ENCODE measurements at regions of chr1 and their contacts with region 1.

Region 1: GRCh38 chr1:67832737-67833601 is at the start of gene GNG12:
- DNase-seq: peak; percentile 84
- H3K4me3 Mint-ChIP-seq: peak within 1 kb of the TSS; percentile 95
- H3K27ac Mint-ChIP-seq: peak within 1 kb of the TSS; percentile 98
- H3K4me1 Mint-ChIP-seq: peaks cover 13% of the 10 kb centered on the region
- H3K27me3 Mint-ChIP-seq: no peaks in the 10 kb centered on the region
- CTCF ChIP-seq: no peak
- total RNA-seq, gene GNG12: 72.2 and 85.6 TPM in 2 replicates

Region 2: GRCh38 chr1:67814121-67814772 is 18.7 kb before region 1 on chr1:
- CTCF ChIA-PET with region 1: interaction called, 3 read pairs
- intact Hi-C with region 1: loop called (anchors 2 kb)
- DNase-seq: no peak
- H3K4me3 Mint-ChIP-seq: no peak overlapping the region
- H3K27ac Mint-ChIP-seq: peak overlapping the region; percentile 50
- H3K4me1 Mint-ChIP-seq: peaks cover 54% of the 10 kb centered on the region
- H3K27me3 Mint-ChIP-seq: no peaks in the 10 kb centered on the region
- CTCF ChIP-seq: no peak

Region 3: DNA sequence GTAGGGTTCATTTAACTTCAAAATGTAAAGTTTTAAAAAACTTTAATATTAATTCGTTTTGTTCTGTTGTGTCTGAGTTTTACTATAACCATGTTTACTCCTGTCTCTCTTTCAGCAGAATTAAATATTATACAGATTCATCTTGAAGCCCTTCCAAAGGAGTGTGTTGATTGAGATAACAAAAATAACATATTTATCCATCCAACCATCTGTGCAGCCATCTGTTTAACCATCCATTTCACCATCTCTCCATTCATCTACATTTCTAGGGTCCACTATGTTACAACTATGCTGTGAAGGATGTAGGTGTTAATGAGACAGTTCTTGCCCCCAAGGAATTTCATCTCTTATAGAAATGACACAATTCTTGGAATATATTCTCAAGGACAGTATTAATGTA is 36.3 kb after region 1 on chr1:
- CTCF ChIA-PET with region 1: no interaction called
- intact Hi-C with region 1: no loop called
- DNase-seq: no peak
- H3K4me3 Mint-ChIP-seq: no peak overlapping the region
- H3K27ac Mint-ChIP-seq: no peak overlapping the region
- H3K4me1 Mint-ChIP-seq: no peaks in the 10 kb centered on the region
- H3K27me3 Mint-ChIP-seq: no peaks in the 10 kb centered on the region
- CTCF ChIP-seq: no peak

Measured in Calu3 (cell line).